GM23248 (cell line): ENCODE measurements at regions of chr3 and their contacts with region 1.

Region 1: GRCh38 chr3:185929192-185930151 is 8.3 kb downstream of the TRA2B start:
- DNase-seq: peak; percentile 77
- H3K4me3 ChIP-seq: peak overlapping the region; percentile 94
- H3K27ac ChIP-seq: peak overlapping the region; percentile 66
- H3K4me1 ChIP-seq: peaks cover 84% of the 10 kb centered on the region
- H3K27me3 ChIP-seq: no peaks in the 10 kb centered on the region

Region 2: GRCh38 chr3:184409331-184409926 is 1520.0 kb before region 1 on chr3:
- in situ Hi-C with region 1: no loop called
- DNase-seq: peak; percentile 15
- H3K4me3 ChIP-seq: no peak overlapping the region
- H3K27ac ChIP-seq: no peak overlapping the region
- H3K4me1 ChIP-seq: no peaks in the 10 kb centered on the region
- H3K27me3 ChIP-seq: no peaks in the 10 kb centered on the region

Region 3: DNA sequence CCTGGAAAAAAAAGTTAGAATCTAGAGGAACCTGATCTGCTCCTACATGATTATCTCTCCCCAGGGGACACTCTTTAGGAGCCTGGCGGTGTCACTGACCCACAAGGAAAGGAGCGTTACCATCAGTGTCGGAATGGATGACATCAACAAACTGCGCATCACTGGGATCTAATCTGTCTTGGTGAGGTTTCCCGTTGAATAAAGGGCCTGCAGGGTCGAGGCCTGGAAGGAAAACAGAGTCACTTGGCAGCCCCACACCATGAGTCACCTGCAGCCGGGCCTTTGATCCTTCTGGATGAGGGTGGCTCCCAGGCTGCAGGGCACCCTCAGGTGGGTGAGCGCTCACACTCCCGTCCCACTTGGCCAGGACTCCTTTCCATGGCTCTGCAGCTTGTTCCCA is 402.1 kb before region 1 on chr3:
- in situ Hi-C with region 1: no loop called
- DNase-seq: no peak
- H3K4me3 ChIP-seq: no peak overlapping the region
- H3K27ac ChIP-seq: no peak overlapping the region
- H3K4me1 ChIP-seq: no peaks in the 10 kb centered on the region
- H3K27me3 ChIP-seq: no peaks in the 10 kb centered on the region

Region 4: DNA sequence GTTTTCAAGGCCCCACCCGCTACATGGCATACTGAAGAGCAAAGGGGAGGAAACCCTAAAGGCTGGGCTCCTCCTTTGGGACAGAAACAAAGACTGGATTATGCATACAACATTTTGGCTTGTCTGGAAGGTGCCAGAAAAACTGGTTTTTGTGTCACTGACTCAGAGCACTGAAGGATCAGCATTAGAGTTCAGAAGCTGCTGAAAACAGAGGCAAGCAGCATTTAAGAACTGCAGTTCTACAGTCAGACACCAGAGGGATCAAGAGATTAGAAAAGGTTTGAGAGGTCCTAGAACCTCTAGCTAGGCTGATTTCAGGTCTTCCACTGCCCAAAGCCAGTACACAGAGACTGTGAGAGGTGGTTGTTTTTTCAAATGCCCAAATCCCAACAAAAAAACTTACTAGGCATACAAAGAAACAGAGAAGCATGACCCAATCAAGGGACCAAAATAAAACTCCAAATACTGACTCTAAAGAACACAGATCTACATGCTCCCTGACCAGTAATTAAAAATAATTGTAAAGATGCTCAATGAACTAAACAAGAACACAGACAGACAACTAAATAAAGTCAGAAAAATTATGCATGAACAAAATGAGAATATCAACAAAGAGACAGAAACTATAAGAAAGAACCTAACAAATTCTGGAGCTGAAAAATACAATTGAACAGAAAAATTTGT is 252.2 kb before region 1 on chr3:
- in situ Hi-C with region 1: loop called (anchors 10 kb)
- DNase-seq: peak; percentile 86
- H3K4me3 ChIP-seq: no peak overlapping the region
- H3K27ac ChIP-seq: peak overlapping the region; percentile 22
- H3K4me1 ChIP-seq: peaks cover 17% of the 10 kb centered on the region
- H3K27me3 ChIP-seq: no peaks in the 10 kb centered on the region